ENCODE measurements at regions of chr1 and their contacts with region 1.

Region 1: DNA sequence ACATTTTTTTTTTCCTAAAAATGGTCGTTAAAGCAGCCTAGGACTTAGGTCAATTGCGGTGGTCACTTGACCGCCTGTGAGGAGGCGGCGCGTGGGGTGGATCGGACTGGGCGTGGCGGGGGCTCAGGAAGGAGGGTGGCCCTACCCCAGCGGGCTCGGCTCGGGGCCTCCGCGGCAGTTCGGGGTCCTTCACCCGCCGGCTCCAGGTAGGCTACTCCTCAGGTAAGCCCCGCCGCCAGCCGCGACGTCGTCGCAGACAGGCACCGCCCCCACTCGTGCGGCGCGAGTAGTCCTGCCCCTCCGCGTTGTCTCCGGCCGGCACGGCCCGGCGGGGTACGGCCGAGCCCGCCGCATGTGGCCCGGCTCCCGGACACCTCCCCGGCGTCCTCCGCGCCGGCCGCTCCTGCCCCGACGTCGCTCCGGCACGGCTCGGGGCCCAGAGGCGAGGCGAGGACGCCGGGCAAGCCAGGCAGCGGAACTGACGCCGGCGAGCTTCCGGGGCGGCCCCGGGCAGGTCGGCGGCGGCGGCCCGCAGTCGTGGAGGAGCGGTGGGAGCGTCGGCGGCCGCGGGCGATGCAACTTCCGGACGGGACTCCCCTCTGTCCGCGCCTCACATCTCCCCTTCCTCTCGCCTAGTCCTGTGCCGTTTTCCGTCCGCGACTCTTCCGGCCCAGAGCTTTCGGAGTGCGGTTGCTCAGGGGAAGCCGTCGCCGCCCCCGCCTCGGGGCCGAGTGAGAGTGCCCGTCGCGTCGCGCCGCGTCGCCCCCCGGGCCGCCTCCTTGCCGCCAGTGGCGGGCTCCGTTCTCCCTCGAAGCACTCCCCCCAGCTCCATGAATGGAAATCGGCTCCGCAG is at the start of gene AGO3:
- DNase-seq: peak; percentile 86
- ATAC-seq: peak; percentile 91
- H3K4me3 Mint-ChIP-seq: peak within 1 kb of the TSS; percentile 91
- H3K27ac Mint-ChIP-seq: peak within 1 kb of the TSS; percentile 91
- H3K4me1 Mint-ChIP-seq: peaks cover 28% of the 10 kb centered on the region
- H3K27me3 Mint-ChIP-seq: no peaks in the 10 kb centered on the region
- CTCF ChIP-seq: no peak
- total RNA-seq, gene AGO3: 30.7 and 37.2 TPM in 2 replicates

Region 2: GRCh38 chr1:35564037-35564883 is 366.6 kb before region 1 on chr1:
- CTCF ChIA-PET with region 1: no interaction called
- POLR2A ChIA-PET with region 1: no interaction called
- intact Hi-C with region 1: no loop called
- DNase-seq: peak; percentile 60
- ATAC-seq: peak; percentile 82
- H3K4me3 Mint-ChIP-seq: no peak overlapping the region
- H3K27ac Mint-ChIP-seq: no peak overlapping the region
- H3K4me1 Mint-ChIP-seq: peaks cover 4% of the 10 kb centered on the region
- H3K27me3 Mint-ChIP-seq: no peaks in the 10 kb centered on the region
- CTCF ChIP-seq: peak; percentile 55

Region 3: GRCh38 chr1:35807614-35808449 is 123.0 kb before region 1 on chr1 and contains the start of gene AGO4:
- CTCF ChIA-PET with region 1: no interaction called
- POLR2A ChIA-PET with region 1: no interaction called
- intact Hi-C with region 1: loop called (anchors 5 kb)
- DNase-seq: peak; percentile 52
- ATAC-seq: peak; percentile 59
- H3K4me3 Mint-ChIP-seq: peak within 1 kb of the TSS; percentile 92
- H3K27ac Mint-ChIP-seq: peak within 1 kb of the TSS; percentile 76
- H3K4me1 Mint-ChIP-seq: peaks cover 39% of the 10 kb centered on the region
- H3K27me3 Mint-ChIP-seq: no peaks in the 10 kb centered on the region
- CTCF ChIP-seq: no peak
- total RNA-seq, gene AGO4: 12.2 and 14.4 TPM in 2 replicates

Region 4: DNA sequence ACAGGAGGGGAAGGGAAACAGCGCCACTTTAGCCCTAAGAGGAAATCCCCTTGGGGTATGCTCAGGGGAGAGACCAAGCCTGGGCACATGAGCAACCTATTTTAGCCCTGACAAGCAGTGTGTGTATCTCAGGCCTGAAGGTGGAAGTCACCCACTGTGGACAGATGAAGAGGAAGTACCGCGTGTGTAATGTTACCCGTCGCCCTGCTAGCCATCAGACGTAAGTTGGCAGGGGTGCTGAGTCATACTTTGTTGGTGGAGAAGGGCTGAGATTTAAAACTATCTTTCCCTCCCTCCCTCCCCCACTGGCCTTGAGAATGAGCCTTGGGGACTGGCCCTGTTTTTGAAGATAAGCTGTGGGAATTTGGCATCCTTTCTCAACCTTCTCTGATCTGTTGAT is 36.6 kb before region 1 on chr1:
- CTCF ChIA-PET with region 1: interaction called, 3 read pairs
- POLR2A ChIA-PET with region 1: interaction called, 9 read pairs
- intact Hi-C with region 1: loop called (anchors 1 kb)
- DNase-seq: peak; percentile 39
- ATAC-seq: peak; percentile 99
- H3K4me3 Mint-ChIP-seq: peak overlapping the region; percentile 25
- H3K27ac Mint-ChIP-seq: peak overlapping the region; percentile 92
- H3K4me1 Mint-ChIP-seq: peaks cover 32% of the 10 kb centered on the region
- H3K27me3 Mint-ChIP-seq: no peaks in the 10 kb centered on the region
- CTCF ChIP-seq: no peak

Region 5: GRCh38 chr1:36088575-36089443 is 158.0 kb after region 1 on chr1 and contains the start of gene ADPRS:
- CTCF ChIA-PET with region 1: no interaction called
- POLR2A ChIA-PET with region 1: interaction called, 8 read pairs
- intact Hi-C with region 1: loop called (anchors 2 kb)
- DNase-seq: peak; percentile 90
- ATAC-seq: peak; percentile 85
- H3K4me3 Mint-ChIP-seq: peak within 1 kb of the TSS; percentile 89
- H3K27ac Mint-ChIP-seq: peak within 1 kb of the TSS; percentile 88
- H3K4me1 Mint-ChIP-seq: peaks cover 17% of the 10 kb centered on the region
- H3K27me3 Mint-ChIP-seq: peaks cover 18% of the 10 kb centered on the region
- CTCF ChIP-seq: no peak
- total RNA-seq, gene ADPRS: 23.0 and 23.9 TPM in 2 replicates